Activated CD4-positive, alpha-beta T cell treated with anti-CD3 and anti-CD28 coated beads, Interleukin-2, amount 10 ng/mL, durations not matched to agents 24 days and 14 days (primary cell): ENCODE measurements at regions of chr20 and their contacts with region 1.

Region 1: GRCh38 chr20:41339507-41340326 is 904 bp upstream of the LPIN3 start:
- DNase-seq: peak; percentile 96
- H3K4me3 Mint-ChIP-seq: peak overlapping the region; percentile 84
- H3K27ac Mint-ChIP-seq: peak overlapping the region; percentile 43
- H3K4me1 Mint-ChIP-seq: peaks cover 10% of the 10 kb centered on the region
- H3K27me3 Mint-ChIP-seq: peaks cover 10% of the 10 kb centered on the region

Region 2: GRCh38 chr20:41173161-41173721 is 166.5 kb before region 1 on chr20:
- intact Hi-C with region 1: loop called (anchors 1 kb)
- DNase-seq: peak; percentile 89
- H3K4me3 Mint-ChIP-seq: no peak overlapping the region
- H3K27ac Mint-ChIP-seq: peak overlapping the region; percentile 46
- H3K4me1 Mint-ChIP-seq: peaks cover 18% of the 10 kb centered on the region
- H3K27me3 Mint-ChIP-seq: no peaks in the 10 kb centered on the region

Region 3: GRCh38 chr20:41232973-41233926 is 106.5 kb before region 1 on chr20:
- intact Hi-C with region 1: loop called (anchors 2 kb)
- DNase-seq: no peak
- H3K4me3 Mint-ChIP-seq: peak overlapping the region; percentile 28
- H3K27ac Mint-ChIP-seq: peak overlapping the region; percentile 3
- H3K4me1 Mint-ChIP-seq: peaks cover 28% of the 10 kb centered on the region
- H3K27me3 Mint-ChIP-seq: no peaks in the 10 kb centered on the region

Region 4: DNA sequence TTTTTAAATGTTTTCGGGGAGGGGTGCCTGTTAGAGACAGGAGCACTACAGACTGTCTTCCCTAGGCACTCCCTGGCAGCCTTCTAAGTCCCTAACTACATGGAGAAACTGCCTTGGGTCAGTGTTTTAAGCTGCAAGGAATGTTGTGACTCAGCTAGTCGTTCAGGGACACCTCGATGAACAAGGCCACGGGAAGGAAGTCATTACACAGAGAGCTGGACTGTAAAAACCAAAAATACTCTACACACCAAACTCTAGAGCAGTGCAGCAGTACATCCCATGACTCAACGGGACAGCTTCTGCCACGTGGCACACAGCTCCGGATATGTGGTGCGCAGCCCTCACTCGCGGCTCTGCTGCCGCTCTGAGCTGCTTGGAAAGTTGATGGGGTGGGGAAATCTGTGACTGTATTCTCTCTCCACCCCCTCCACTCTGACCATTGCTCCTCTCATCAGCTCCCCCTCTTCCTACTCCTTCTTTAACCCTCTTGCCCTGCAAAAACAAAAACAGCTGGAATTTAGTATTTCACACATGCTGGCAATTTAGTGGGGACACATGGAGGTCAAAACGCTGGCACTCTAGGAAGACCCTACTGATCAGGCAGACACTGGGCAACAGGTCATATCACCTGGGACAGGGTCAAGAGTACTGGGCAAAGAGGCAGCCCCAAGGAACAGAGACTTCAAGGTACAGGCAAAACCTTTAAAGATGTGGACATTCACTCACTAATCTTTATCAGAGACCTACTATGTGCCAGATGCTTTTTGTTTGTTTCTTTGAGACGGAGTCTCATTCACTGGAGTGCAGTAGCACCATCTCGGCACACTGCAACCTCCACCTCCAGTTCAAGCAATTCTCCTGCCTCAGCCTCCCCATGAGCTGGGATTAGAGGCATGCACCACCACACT is 10.0 kb before region 1 on chr20:
- intact Hi-C with region 1: loop called (anchors 1 kb)
- DNase-seq: peak; percentile 86
- H3K4me3 Mint-ChIP-seq: no peak overlapping the region
- H3K27ac Mint-ChIP-seq: peak overlapping the region; percentile 83
- H3K4me1 Mint-ChIP-seq: peaks cover 12% of the 10 kb centered on the region
- H3K27me3 Mint-ChIP-seq: peaks cover 3% of the 10 kb centered on the region